ENCODE measurements at regions of chr2 and their contacts with region 1.

Region 1: DNA sequence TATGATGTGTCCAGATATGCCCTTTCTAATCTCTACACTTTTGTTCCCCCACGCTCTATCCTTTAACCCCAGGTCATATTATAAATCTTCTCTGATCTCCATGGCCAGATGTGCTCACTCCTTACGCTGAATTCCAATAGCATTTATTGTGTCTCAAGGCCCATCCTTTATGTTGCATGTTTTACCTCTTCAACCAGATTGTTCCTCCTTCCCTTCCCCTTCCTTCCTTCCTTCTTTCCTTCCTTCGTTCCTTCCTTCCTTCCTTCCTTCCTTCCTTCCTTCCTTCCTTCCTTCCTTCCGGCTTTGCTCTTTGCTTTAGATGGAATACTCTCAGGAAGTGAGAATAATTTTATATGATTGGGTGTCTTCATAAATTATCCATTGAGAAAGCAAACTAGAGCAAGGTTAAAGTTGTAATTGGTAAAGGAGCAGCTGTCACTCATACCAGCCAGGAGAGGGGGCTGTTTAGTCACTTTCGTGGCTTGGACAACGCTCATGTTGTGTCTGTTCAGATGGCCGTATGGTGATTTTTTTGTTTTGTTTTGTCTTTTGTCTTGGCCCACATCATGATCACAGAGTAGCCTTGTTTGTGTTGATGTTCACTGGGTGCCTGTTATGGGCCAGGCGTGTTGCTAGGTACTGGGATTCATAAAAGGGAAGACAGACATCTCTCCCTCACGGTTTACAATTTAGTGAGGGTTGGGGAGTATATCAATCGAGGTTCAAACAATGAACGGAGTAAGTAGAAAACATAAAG is 68.0 kb downstream of the DAW1 start:
- DNase-seq: peak in 8 of 10 donors; percentile 16 to 50 (median 40)
- H3K4me3 ChIP-seq: peak overlapping the region in 7 of 59 donors; percentile 8 to 28 (median 16)
- H3K27ac ChIP-seq: peak overlapping the region in 52 of 59 donors; percentile 2 to 84 (median 58)
- H3K27me3 ChIP-seq: peaks cover 0 to 4% (median 0%) of the 10 kb centered on the region in 45 donors
- CTCF ChIP-seq: peak in 55 of 56 donors; percentile 21 to 84 (median 66)

Region 2: GRCh38 chr2:228048838-228049490 is 109.5 kb after region 1 on chr2:
- intact Hi-C with region 1: loop called in 1 of 2 experiments (anchors 5 kb)
- DNase-seq: peak in 1 of 10 donors; percentile 16
- H3K4me3 ChIP-seq: no peak overlapping the region
- H3K27ac ChIP-seq: no peak overlapping the region
- H3K27me3 ChIP-seq: no peaks in the 10 kb centered on the region
- CTCF ChIP-seq: peak; percentile 43 to 77 (median 62)